ENCODE measurements at regions of chr1 and their contacts with region 1.

Region 1: GRCh38 chr1:115952645-115953044 is 23.7 kb upstream of the SLC22A15 start:
- DNase-seq: no peak
- ATAC-seq: no peak

Region 2: DNA sequence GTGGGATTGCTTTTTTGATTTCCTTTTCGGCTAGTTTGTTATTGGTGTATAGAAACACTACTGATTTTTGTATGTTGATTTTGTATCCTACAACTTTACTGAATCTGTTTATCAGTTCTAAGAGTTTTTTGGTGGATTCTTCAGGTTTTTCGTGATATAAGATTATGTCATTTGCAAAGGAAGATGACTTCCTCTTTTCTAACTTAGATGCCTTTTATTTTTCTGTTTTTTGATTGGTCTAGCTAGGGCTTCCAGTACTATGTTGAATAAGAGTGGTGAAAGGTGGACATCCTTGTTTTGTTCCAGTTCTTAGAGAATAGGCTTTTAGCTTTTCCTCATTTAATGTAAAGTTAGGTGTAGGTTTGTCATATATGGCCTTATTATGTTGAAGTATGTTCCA is 98.6 kb before region 1 on chr1:
- intact Hi-C with region 1: loop called in 1 of 2 experiments (anchors 10 kb)
- DNase-seq: no peak
- ATAC-seq: no peak

Region 3: GRCh38 chr1:115911324-115911723 is 41.3 kb before region 1 on chr1:
- intact Hi-C with region 1: no loop called
- DNase-seq: no peak
- ATAC-seq: no peak

Region 4: DNA sequence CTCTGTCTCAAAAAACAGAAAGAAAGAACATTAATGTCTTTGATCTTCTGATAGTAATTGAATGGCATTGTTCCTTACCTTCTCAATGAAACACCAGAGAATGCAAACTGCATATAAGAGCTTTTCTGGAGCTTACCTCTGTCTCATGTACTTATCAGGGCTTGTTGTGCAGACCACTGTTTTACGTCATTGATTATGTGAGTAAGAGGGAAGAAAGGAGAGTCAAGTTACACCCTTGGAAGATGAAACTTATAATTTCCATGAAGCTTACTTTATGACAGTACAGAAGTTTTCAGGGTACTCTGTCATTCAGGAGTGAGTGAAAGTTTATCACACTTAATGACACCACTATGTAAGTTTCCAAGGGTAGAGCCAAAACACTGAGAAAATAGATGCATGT is 109.6 kb after region 1 on chr1:
- intact Hi-C with region 1: no loop called
- DNase-seq: no peak
- ATAC-seq: no peak